Psoas muscle (tissue), 8 donors: ENCODE measurements at regions of chr11 and their contacts with region 1.

Region 1: GRCh38 chr11:11036848-11037732 is 179.2 kb upstream of the ZBED5 start:
- DNase-seq: no peak
- ATAC-seq: peak; percentile 73 to 82 (median 78)
- H3K4me3 ChIP-seq: no peak overlapping the region
- H3K27ac ChIP-seq: peak overlapping the region; percentile 44
- H3K4me1 ChIP-seq: peaks cover 13% of the 10 kb centered on the region
- H3K27me3 ChIP-seq: no peaks in the 10 kb centered on the region
- CTCF ChIP-seq: peak; percentile 80

Region 2: DNA sequence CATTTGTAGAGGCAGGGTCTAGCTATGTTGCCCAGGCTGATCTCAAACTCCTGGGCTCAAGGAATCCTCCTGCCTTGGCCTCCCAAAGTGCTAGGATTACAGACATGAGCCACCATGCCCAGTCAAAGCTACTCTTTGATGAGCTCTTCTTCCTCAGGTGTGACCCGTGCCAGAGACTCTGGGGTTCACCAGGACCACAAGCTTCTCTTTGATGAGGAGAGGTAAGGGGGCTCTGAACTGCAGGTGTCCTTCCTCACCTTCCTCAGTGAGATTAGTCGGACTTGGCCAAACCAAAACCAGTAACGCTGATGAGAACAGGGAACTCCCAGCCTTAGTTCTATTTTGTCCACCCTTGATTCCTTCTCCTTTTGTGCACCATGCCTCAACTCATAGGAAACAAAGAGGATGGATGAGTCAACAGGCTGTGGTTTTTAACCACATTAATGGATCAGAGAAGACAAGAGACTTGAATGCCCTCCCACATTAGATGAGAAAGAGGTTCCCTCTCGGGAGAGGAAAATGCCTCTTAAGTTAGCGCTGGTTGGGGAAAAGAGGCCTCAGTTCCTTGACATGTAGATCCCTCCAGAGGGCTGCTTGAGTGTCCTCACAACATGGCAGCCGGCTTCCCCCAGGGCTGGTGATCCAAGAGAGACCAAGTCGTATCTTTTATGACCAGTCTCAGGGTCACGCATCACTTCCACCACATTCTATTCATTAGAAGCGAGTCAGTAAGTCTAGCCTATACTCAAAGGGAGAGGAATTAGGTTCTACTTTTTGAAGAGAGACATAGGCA is 311.8 kb before region 1 on chr11:
- intact Hi-C with region 1: no loop called
- DNase-seq: no peak
- ATAC-seq: no peak
- H3K4me3 ChIP-seq: no peak overlapping the region
- H3K27ac ChIP-seq: no peak overlapping the region
- H3K4me1 ChIP-seq: no peaks in the 10 kb centered on the region
- H3K27me3 ChIP-seq: no peaks in the 10 kb centered on the region
- CTCF ChIP-seq: no peak

Region 3: DNA sequence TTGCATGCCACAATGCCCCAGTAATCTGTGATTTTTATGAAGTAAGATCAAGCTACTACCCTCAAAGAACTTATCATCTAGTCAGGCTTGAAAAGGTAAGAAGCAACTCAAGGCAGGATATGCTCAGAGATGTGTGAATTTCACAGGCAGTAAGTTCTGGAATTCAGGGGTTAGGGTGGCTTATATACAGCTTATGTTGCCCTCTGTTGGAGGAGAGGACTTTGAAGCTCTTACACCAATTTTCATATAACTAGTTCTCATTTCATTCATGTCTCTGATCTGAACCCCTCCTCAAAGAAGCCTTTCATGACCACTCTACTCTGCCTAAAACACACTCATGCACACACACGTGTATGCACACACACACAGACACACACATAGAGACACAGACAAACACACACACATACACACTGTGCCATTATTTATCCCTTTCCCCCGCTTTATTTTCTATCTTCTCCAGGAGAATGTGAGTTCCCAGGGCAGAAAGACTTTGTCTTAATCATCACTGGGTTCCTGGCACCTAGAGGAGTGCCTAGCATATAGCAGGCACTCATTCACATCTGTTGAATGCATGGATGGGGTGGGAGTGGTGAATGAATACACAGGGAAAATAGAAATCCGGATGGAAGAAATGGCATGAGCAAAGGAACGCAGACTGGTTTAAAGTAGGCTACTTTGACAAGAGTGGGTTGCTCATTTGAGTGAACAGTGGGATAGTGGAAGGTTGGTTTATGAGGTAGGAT is 41.4 kb after region 1 on chr11:
- intact Hi-C with region 1: loop called (anchors 2 to 5 kb)
- DNase-seq: no peak
- ATAC-seq: peak; percentile 47 to 57 (median 52)
- H3K4me3 ChIP-seq: no peak overlapping the region
- H3K27ac ChIP-seq: no peak overlapping the region
- H3K4me1 ChIP-seq: peaks cover 46% of the 10 kb centered on the region
- H3K27me3 ChIP-seq: no peaks in the 10 kb centered on the region
- CTCF ChIP-seq: no peak

Region 4: DNA sequence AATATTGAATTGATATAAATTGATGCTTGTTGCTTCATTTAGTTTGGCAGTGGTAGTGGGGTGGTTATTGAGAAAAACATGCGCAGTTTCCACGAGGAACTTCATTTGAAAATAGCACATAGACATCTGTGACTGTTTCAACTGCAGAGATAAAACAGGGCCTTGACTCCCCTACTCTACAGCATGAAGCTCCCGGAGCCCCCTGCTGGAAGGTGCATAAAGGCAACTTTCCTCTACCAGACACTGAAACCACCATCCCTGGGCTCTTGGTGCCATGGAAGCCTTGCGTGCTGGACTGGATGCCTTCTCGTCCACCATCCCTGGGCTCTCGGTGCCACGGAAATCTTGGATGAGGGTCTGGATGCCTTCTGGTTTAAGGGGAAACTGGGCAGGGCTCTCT is 120.1 kb after region 1 on chr11:
- intact Hi-C with region 1: loop called (anchors 5 kb)
- DNase-seq: no peak
- ATAC-seq: peak; percentile 34 to 91 (median 78)
- H3K4me3 ChIP-seq: no peak overlapping the region
- H3K27ac ChIP-seq: no peak overlapping the region
- H3K4me1 ChIP-seq: no peaks in the 10 kb centered on the region
- H3K27me3 ChIP-seq: no peaks in the 10 kb centered on the region
- CTCF ChIP-seq: peak; percentile 47

Region 5: GRCh38 chr11:11265994-11266606 is 229.0 kb after region 1 on chr11:
- intact Hi-C with region 1: loop called (anchors 2 kb)
- DNase-seq: peak; percentile 40 to 76
- ATAC-seq: peak; percentile 69 to 92 (median 84)
- H3K4me3 ChIP-seq: no peak overlapping the region
- H3K27ac ChIP-seq: no peak overlapping the region
- H3K4me1 ChIP-seq: no peaks in the 10 kb centered on the region
- H3K27me3 ChIP-seq: no peaks in the 10 kb centered on the region
- CTCF ChIP-seq: peak; percentile 82